ENCODE measurements at regions of chr4 and their contacts with region 1.

Region 1: GRCh38 chr4:38872604-38873006 is 5.0 kb downstream of the FAM114A1 start:
- DNase-seq: no peak
- H3K4me3 ChIP-seq: no peak overlapping the region
- H3K27ac ChIP-seq: no peak overlapping the region
- H3K4me1 ChIP-seq: peaks cover 0 to 7% (median 5%) of the 10 kb centered on the region in 4 experiments
- H3K27me3 ChIP-seq: no peaks in the 10 kb centered on the region

Region 2: GRCh38 chr4:38856524-38857337 is 15.9 kb before region 1 on chr4 and contains the start of gene TLR6:
- CTCF ChIA-PET with region 1: interaction called, 11 read pairs
- POLR2A ChIA-PET with region 1: interaction called, 3 read pairs
- DNase-seq: peak; percentile 88 to 94 (median 93)
- H3K4me3 ChIP-seq: peak within 1 kb of the TSS in 6 of 7 experiments; percentile 66 to 89 (median 70)
- H3K27ac ChIP-seq: peak within 1 kb of the TSS; percentile 64 to 86
- H3K4me1 ChIP-seq: peaks cover 9 to 34% (median 25%) of the 10 kb centered on the region in 4 experiments
- H3K27me3 ChIP-seq: no peaks in the 10 kb centered on the region

Region 3: GRCh38 chr4:38914854-38915253 is 42.2 kb after region 1 on chr4:
- CTCF ChIA-PET with region 1: no interaction called
- POLR2A ChIA-PET with region 1: no interaction called
- DNase-seq: peak in 1 of 3 donors; percentile 23
- H3K4me3 ChIP-seq: peak overlapping the region in 4 of 7 experiments; percentile 2 to 65 (median 38)
- H3K27ac ChIP-seq: no peak overlapping the region
- H3K4me1 ChIP-seq: peaks cover 0 to 8% (median 3%) of the 10 kb centered on the region in 4 experiments
- H3K27me3 ChIP-seq: no peaks in the 10 kb centered on the region

Region 4: DNA sequence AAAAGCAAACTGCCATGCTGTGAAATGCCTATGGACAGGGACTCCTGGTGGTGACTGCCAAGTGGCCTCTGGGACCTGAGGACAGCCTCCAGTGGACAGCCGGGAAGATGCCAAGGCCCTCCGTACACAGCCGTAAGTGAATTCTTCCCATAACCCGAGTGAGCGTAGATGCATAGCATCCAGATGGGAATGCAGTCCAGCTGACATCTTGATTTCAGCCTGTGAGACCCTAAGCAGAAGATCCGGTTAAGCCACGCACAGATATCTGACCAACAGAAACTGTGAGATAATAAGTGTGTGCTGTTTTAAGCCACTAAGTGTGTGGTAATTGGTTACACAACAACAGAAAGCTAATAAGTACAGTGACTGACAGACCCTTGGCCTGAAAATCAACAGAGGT is 103.7 kb after region 1 on chr4:
- CTCF ChIA-PET with region 1: no interaction called
- POLR2A ChIA-PET with region 1: no interaction called
- DNase-seq: no peak
- H3K4me3 ChIP-seq: no peak overlapping the region
- H3K27ac ChIP-seq: no peak overlapping the region
- H3K4me1 ChIP-seq: peaks cover 0 to 4% (median 1%) of the 10 kb centered on the region in 4 experiments
- H3K27me3 ChIP-seq: no peaks in the 10 kb centered on the region